MCF 10A (cell line): ENCODE measurements at regions of chr10 and their contacts with region 1.

Region 1: GRCh38 chr10:103739039-103739764 is 116.2 kb downstream of the SH3PXD2A start:
- DNase-seq: peak; percentile 60
- H3K4me3 Mint-ChIP-seq: peak overlapping the region; percentile 58
- H3K27ac Mint-ChIP-seq: peak overlapping the region; percentile 22
- H3K4me1 Mint-ChIP-seq: peaks cover 15% of the 10 kb centered on the region
- H3K27me3 Mint-ChIP-seq: no peaks in the 10 kb centered on the region
- CTCF ChIP-seq: no peak

Region 2: DNA sequence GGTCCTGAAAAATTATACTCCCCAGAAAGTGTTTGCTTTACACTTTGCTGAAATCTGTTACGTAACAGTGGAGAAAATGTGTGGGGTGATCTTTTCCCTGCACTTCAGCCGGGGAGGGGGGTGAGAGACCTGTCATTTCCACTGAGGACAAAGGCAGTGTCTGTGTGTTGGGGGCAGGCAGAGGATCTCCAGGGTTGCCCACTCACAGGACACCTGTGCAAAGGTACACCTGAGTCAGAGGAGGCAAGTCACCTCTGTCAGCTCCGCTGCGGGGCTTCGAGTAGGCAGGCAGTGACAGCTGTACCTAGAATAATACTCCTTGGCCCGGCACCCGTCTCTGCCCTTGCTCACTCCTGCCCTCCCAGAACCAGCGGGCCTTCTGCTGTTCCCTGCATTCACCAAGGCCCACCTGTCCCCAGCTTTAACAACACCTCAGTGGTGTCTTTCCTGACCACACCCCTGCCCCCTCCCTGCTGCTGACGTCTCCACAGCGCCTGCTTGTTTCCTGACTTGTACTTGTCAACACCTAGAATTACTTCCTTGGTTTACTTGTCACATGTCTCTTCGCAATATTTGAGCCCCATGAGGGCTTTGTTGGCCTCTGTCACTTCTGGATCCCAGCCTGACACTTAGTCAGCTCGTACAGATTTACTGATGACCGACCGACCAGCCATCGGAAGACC is 86.5 kb before region 1 on chr10:
- CTCF ChIA-PET with region 1: no interaction called
- POLR2A ChIA-PET with region 1: no interaction called
- intact Hi-C with region 1: no loop called
- DNase-seq: no peak
- H3K4me3 Mint-ChIP-seq: no peak overlapping the region
- H3K27ac Mint-ChIP-seq: no peak overlapping the region
- H3K4me1 Mint-ChIP-seq: peaks cover 6% of the 10 kb centered on the region
- H3K27me3 Mint-ChIP-seq: no peaks in the 10 kb centered on the region
- CTCF ChIP-seq: no peak

Region 3: DNA sequence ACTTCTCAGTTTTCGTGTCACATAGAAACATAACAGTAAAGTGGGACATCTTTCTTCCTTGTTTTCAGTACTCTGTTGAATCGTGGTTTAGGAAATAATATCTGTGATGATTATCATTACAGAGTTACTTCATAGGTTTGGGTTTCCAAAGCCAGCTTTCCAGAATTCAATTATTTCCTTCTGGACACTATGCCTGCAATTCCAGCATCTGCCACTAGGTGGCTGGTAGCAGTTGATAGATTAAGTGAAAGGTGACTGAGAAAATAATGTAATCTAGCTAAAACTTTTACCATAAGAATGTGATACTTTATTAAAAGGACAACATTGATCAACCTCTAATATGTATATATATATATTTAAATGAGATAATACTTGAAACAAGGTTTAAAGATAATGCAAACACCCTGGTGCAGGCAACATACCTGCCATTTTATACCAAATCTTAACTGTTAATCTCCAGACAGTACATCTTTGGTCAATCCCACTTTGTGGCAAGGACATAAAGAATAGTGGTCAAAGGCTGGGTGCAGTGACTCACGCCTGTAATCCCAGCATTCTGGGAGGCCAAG is 13.6 kb after region 1 on chr10:
- CTCF ChIA-PET with region 1: interaction called, 22 read pairs
- POLR2A ChIA-PET with region 1: interaction called, 4 read pairs
- intact Hi-C with region 1: no loop called
- DNase-seq: peak; percentile 46
- H3K4me3 Mint-ChIP-seq: no peak overlapping the region
- H3K27ac Mint-ChIP-seq: no peak overlapping the region
- H3K4me1 Mint-ChIP-seq: peaks cover 25% of the 10 kb centered on the region
- H3K27me3 Mint-ChIP-seq: no peaks in the 10 kb centered on the region
- CTCF ChIP-seq: peak; percentile 84